Aorta (tissue), 5 donors: ENCODE measurements at regions of chr10 and their contacts with region 1.

Region 1: GRCh38 chr10:21495752-21496342 is 29.6 kb downstream of the SKIDA1 start:
- DNase-seq: peak; percentile 86 to 96
- ATAC-seq: peak; percentile 94
- H3K4me3 ChIP-seq: peak overlapping the region; percentile 72 to 90
- H3K27ac ChIP-seq: no peak overlapping the region
- H3K4me1 ChIP-seq: no peaks in the 10 kb centered on the region
- H3K27me3 ChIP-seq: no peaks in the 10 kb centered on the region

Region 2: DNA sequence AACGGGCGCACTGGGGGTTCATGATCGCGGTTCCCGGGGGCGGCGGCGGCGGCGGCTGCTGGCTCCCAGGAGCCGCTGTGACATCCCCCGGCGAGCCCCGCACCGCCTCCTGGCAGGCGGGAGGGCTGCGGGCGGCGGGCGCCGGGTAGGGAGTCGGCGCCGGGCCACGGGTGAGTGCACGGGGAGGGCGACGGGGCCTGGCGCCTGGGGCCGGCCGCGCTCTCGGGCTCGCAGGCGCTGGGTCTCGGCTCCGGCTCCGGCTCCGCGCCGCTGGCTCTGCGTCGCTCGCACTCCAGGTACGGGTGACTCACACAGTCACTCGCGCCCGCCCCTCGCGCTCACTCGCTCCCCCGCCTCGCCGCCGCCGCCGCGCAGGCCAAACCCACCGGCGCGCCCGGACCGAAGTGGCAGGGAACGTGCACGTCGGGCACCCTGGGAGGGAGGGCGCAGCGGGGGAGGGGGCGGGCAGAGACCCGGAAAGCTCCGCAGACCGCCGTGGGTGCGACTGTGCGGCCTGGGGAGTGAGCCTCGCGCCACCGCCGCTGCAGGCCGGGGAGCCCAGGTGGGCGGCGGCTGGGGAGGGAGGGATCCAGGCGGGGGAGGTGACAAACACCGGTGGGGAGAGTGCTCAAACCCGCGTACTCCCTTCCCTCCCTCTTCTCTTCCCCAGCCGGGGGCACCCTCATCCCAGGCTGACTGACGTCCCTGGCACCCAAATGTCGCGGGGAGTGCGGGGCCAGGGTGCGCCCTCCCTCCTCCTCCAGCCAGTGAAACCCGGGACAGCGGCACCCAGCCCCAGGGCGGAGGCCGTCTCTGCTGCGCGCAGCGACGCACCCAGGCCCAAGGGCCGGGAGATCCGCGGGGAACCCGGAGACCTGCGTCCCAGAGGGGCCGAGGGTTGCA is 321.8 kb before region 1 on chr10:
- intact Hi-C with region 1: no loop called
- DNase-seq: peak in 1 of 2 donors; percentile 78
- ATAC-seq: peak; percentile 47
- H3K4me3 ChIP-seq: peak overlapping the region in 1 of 2 donors; percentile 12
- H3K27ac ChIP-seq: no peak overlapping the region
- H3K4me1 ChIP-seq: no peaks in the 10 kb centered on the region
- H3K27me3 ChIP-seq: no peaks in the 10 kb centered on the region

Region 3: GRCh38 chr10:21314906-21315644 is 180.8 kb before region 1 on chr10:
- intact Hi-C with region 1: no loop called
- DNase-seq: peak in 1 of 2 donors; percentile 58
- ATAC-seq: peak; percentile 39
- H3K4me3 ChIP-seq: no peak overlapping the region
- H3K27ac ChIP-seq: peak overlapping the region in 1 of 2 donors; percentile 7
- H3K4me1 ChIP-seq: no peaks in the 10 kb centered on the region
- H3K27me3 ChIP-seq: no peaks in the 10 kb centered on the region

Region 4: DNA sequence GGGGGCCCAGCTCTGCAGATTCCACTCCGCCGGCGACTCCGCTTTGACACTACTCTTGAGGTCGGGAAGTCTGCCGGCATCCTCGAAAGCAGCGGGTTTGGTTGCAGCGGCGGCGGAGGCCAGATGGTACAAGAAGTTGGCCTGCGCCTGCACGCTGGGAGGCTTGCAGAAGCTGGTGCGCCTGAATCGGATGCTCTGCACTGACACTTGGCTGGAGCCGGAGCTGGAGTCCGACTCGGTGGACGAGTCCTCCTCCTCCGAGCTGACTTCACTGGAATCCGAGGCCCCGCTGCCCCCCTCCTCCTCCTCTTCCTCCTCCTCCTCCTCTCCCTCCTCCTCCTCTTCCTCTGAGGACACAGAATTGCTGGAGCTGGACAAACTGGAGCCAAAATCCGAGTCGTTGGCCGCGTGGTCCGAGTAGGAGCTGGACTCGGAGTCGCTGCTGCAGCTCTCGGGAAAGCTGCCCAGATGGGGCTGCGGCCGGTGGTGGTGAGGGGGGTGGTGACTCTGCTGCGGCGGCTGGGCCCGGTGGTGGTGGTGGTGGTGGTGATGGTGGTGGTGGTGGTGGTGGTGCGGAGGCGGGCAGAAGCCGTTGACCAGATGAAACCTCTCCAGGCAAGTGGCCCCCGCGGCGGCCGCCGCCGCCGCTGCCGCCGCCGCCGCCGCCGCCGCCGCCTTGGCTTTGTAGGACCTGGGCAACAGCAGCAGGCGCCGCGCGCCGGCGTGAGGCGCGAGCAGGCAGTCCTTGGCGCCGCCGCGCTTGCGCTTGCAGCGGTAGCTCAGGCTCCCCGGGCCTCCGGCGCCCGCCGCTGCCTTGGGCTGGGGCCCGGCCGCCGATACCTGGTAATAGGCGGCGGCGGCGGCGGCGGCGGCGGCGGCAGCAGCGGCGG is 20.6 kb after region 1 on chr10:
- intact Hi-C with region 1: loop called in 1 of 2 experiments (anchors 2 kb)
- DNase-seq: peak; percentile 77 to 88
- ATAC-seq: peak; percentile 72
- H3K4me3 ChIP-seq: peak overlapping the region; percentile 83 to 88
- H3K27ac ChIP-seq: peak overlapping the region in 1 of 2 donors; percentile 35
- H3K4me1 ChIP-seq: peaks cover 0 to 8% of the 10 kb centered on the region in 2 donors
- H3K27me3 ChIP-seq: no peaks in the 10 kb centered on the region

Region 5: DNA sequence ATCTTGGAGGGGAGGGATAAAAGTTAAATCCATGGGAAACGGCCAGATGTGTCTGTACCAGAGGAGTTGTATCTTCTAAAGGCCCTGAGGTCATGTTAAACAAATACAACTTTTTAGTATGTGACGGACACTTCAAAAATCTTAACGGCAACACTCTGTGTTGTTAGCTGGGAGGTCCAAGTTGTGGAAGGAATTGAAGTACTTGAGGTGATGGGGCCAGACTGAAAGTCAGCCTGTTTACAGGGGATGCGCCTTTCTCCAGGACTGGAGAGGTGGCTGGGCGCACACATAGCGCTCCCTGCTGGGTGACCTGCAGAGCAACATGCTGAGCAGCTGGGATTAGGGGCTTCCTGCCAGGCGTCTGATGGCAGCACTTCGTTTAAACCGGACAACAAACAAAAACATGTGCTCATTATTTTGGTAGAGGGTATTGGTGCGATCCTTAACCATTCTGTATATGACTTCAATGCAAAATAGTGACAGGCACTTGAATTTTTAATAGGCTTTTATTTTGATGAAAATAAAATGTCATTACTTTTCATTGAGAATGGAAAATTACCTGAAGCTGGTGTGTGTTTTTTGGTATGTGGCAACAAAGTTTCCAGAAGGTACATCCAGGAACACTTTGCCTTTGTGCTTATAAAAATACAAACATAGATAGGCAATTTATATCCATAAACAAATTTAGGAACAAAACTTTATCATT is 236.4 kb after region 1 on chr10:
- intact Hi-C with region 1: loop called (anchors 2 to 5 kb)
- DNase-seq: peak in 1 of 2 donors; percentile 58
- ATAC-seq: peak; percentile 87
- H3K4me3 ChIP-seq: no peak overlapping the region
- H3K27ac ChIP-seq: no peak overlapping the region
- H3K4me1 ChIP-seq: no peaks in the 10 kb centered on the region
- H3K27me3 ChIP-seq: no peaks in the 10 kb centered on the region

Region 6: DNA sequence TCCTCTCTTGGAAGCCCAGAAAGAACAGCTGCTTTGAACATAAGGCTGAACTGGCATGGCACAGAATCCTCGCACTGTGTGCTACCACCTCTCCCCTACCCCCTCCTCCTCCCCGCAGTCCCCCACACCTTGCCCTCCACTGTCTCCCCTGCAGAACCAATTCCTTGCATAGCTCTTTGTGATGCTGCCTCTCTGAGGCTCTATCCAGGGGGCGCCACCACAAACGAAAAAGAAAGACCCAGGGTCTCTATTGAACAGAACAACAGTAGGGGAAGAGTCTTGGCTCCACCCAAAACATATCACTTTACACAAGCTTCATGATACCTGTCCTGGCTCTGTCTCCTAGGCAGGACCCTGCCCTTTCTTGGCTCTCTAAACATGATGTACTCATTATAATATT is 748.2 kb after region 1 on chr10:
- intact Hi-C with region 1: loop called in 1 of 2 experiments (anchors 10 kb)
- DNase-seq: no peak
- ATAC-seq: no peak
- H3K4me3 ChIP-seq: no peak overlapping the region
- H3K27ac ChIP-seq: no peak overlapping the region
- H3K4me1 ChIP-seq: no peaks in the 10 kb centered on the region
- H3K27me3 ChIP-seq: no peaks in the 10 kb centered on the region

Region 7: GRCh38 chr10:22325272-22326144 is 829.7 kb after region 1 on chr10:
- intact Hi-C with region 1: loop called in 1 of 2 experiments (anchors 10 kb)
- DNase-seq: peak; percentile 83 to 92
- ATAC-seq: peak; percentile 72
- H3K4me3 ChIP-seq: peak overlapping the region; percentile 44 to 92
- H3K27ac ChIP-seq: peak overlapping the region in 1 of 2 donors; percentile 52
- H3K4me1 ChIP-seq: peaks cover 2 to 3% of the 10 kb centered on the region in 2 donors
- H3K27me3 ChIP-seq: no peaks in the 10 kb centered on the region